ENCODE measurements at regions of chr20 and their contacts with region 1.

Region 1: GRCh38 chr20:4272225-4272624 is 256.9 kb upstream of the RNF24 start:
- DNase-seq: no peak
- H3K4me3 ChIP-seq: no peak overlapping the region
- H3K27ac ChIP-seq: no peak overlapping the region
- H3K4me1 ChIP-seq: no peaks in the 10 kb centered on the region
- H3K27me3 ChIP-seq: no peaks in the 10 kb centered on the region
- CTCF ChIP-seq: no peak

Region 2: DNA sequence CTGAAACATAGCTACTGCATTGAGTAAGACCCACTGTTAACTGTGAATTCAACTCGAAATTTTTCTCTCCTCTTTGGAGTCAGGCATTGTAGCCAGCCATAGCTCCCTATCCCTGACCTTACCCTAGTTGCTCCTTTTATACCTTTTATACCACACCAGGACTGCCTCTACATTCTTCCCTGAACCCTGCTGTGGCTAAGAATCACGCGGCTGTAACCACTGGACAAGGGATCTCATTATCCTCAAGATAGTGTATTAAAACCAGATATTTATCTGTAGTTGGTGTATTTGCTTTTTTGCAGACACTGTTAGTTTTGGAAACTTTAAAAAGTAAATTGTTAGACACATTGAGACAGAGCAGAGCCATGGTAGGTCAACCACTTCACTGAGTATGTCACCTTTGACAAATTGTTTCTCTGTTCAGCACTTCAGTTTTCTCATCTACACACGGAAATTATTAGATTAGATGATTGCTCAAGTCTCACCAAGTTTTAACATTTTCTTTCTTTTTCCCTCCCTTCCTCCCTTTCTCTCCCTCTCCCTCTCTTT is 277.6 kb after region 1 on chr20:
- CTCF ChIA-PET with region 1: interaction called, 10 read pairs
- POLR2A ChIA-PET with region 1: no interaction called
- intact Hi-C with region 1: no loop called
- DNase-seq: no peak
- H3K4me3 ChIP-seq: no peak overlapping the region
- H3K27ac ChIP-seq: no peak overlapping the region
- H3K4me1 ChIP-seq: peaks cover 30% of the 10 kb centered on the region
- H3K27me3 ChIP-seq: no peaks in the 10 kb centered on the region
- CTCF ChIP-seq: no peak